ENCODE measurements at regions of chr1 and their contacts with region 1.

Region 1: GRCh38 chr1:101288491-101288944 is 51.7 kb downstream of the S1PR1 start:
- DNase-seq: peak; percentile 79
- ATAC-seq: peak; percentile 58
- H3K4me3 Mint-ChIP-seq: no peak overlapping the region
- H3K27ac Mint-ChIP-seq: no peak overlapping the region
- H3K4me1 Mint-ChIP-seq: peaks cover 76% of the 10 kb centered on the region
- H3K27me3 Mint-ChIP-seq: no peaks in the 10 kb centered on the region

Region 2: GRCh38 chr1:100905181-100905580 is 383.3 kb before region 1 on chr1:
- CTCF ChIA-PET with region 1: interaction called, 21 read pairs
- POLR2A ChIA-PET with region 1: interaction called, 4 read pairs
- DNase-seq: no peak
- ATAC-seq: no peak
- H3K4me3 Mint-ChIP-seq: no peak overlapping the region
- H3K27ac Mint-ChIP-seq: no peak overlapping the region
- H3K4me1 Mint-ChIP-seq: peaks cover 21% of the 10 kb centered on the region
- H3K27me3 Mint-ChIP-seq: no peaks in the 10 kb centered on the region

Region 3: DNA sequence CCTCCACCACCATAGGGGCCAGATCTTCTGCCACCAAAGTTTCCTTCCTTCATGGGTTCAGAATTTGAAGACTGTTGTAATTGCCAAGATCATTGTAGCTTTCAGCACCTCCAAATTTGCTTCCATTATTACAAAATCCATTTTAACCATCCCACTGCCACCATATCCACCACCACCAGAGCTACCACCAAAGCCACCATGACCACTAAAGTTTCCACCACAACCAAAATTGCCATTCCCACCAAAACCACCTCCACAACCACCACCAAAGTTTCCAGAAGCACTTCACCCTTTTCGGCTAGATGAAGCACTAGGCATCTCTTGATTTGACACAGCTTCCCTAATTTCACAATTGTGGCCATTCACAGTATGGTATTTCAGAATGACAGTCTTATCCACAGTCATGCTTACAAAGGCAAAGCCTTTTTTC is 347.4 kb before region 1 on chr1:
- CTCF ChIA-PET with region 1: interaction called, 12 read pairs
- POLR2A ChIA-PET with region 1: no interaction called
- DNase-seq: no peak
- ATAC-seq: peak; percentile 44
- H3K4me3 Mint-ChIP-seq: peak overlapping the region; percentile 64
- H3K27ac Mint-ChIP-seq: peak overlapping the region; percentile 80
- H3K4me1 Mint-ChIP-seq: peaks cover 35% of the 10 kb centered on the region
- H3K27me3 Mint-ChIP-seq: no peaks in the 10 kb centered on the region

Region 4: DNA sequence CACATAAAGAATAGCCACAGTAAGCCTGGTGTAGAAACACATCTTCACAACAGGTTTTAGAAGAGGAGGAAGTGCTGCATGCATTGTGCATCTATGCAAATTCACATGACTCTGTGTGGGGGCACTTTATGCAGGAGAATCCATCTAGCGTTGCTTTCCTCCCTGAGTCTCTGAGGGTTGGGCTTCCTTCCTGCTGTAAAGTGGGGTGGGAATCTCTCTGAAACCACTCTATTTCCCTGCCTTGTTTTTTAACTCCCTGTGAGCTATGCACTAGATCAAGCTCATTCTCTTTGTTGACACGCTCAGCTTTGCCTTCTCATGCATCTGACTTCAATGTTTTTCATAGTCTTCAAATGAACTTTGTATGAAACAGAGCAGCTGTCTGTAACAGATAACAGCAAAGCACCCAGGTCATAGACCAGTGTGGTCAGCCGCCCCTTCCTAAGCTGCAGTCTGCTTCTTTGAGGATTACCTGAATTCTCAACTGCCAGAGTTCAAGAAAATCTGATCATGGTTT is 160.2 kb before region 1 on chr1:
- CTCF ChIA-PET with region 1: interaction called, 39 read pairs
- POLR2A ChIA-PET with region 1: interaction called, 4 read pairs
- DNase-seq: peak; percentile 47
- ATAC-seq: peak; percentile 74
- H3K4me3 Mint-ChIP-seq: peak overlapping the region; percentile 58
- H3K27ac Mint-ChIP-seq: peak overlapping the region; percentile 81
- H3K4me1 Mint-ChIP-seq: peaks cover 78% of the 10 kb centered on the region
- H3K27me3 Mint-ChIP-seq: no peaks in the 10 kb centered on the region

Region 5: DNA sequence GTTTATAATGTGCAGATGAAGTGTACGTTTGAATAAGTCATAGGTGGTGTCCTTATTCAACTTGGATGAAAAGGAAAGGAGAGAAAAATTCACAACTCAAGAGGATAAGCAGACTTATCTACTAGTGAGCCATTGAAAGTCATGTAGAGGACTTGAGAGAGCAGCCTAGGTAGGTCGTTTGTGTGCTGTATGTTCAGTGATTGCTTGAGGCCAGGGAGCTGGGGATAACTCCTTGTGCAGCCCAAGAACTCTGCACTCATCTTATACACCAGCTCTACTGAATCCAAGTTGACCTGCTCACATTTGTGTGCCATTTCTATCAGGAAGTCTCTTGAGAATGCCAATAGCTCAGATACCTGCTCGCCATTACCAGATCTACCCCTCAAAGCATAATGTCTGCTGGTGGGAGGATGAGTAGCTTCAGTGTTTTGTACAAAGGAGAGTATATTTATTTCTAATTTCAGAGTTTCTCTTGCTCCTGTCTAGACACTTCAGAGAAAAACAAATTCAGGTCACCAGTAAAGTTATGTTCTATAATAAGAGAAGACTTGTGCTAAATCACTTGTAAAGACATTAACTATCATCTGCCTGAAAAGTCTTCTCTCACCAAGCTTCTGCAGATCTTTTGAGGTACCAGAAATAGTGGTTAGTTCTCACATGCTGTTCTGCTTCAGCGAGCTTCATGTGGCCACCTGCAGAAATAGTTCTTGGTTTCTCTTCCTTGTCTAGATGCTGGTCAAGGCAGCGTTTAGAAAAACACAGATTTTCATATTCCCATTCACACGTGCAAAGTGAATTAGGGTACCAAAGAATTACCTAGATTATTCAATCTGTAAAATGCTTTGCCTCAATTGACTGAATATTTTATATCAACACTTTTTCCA is 40.9 kb before region 1 on chr1:
- CTCF ChIA-PET with region 1: interaction called, 43 read pairs
- POLR2A ChIA-PET with region 1: interaction called, 6 read pairs
- DNase-seq: peak; percentile 11
- ATAC-seq: no peak
- H3K4me3 Mint-ChIP-seq: no peak overlapping the region
- H3K27ac Mint-ChIP-seq: no peak overlapping the region
- H3K4me1 Mint-ChIP-seq: peaks cover 22% of the 10 kb centered on the region
- H3K27me3 Mint-ChIP-seq: no peaks in the 10 kb centered on the region

Region 6: GRCh38 chr1:101298663-101299062 is 10.1 kb after region 1 on chr1:
- CTCF ChIA-PET with region 1: interaction called, 12 read pairs
- POLR2A ChIA-PET with region 1: no interaction called
- DNase-seq: no peak
- ATAC-seq: no peak
- H3K4me3 Mint-ChIP-seq: no peak overlapping the region
- H3K27ac Mint-ChIP-seq: no peak overlapping the region
- H3K4me1 Mint-ChIP-seq: peaks cover 14% of the 10 kb centered on the region
- H3K27me3 Mint-ChIP-seq: peaks cover 29% of the 10 kb centered on the region

Region 7: DNA sequence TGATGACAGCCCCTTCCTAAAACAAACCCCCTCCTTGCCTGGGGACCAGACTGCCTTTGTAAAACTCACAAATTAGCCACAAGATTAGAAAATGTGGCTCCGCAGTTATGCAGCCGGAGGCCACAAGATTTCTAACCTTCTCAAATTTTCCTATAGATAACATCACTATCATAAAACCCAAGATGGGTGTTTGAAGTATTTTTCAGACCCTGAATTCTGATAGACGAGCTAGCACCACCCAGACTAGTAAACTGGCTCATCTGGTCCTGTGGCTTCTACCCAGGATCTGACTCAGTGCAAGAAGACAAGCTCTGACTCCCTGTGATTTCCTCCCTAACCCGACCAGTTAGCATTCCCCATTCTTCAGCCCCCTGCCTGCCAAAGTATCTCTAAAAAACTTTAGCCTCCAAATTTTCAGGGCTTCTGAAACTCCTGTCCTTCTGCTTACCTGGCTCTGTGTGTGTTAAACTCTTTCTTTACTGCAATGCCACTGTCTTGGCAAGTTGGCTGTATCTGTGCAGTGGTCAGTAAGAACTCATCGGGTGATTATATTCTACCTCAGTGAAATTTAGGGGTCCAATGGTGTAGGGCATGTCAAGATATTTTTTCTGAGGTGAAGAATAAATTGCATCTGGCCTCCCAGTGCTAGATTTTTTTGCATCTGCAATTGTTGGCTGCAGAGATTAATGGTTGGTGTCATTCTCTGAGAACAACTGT is 50.4 kb after region 1 on chr1:
- CTCF ChIA-PET with region 1: no interaction called
- POLR2A ChIA-PET with region 1: no interaction called
- DNase-seq: no peak
- ATAC-seq: peak; percentile 64
- H3K4me3 Mint-ChIP-seq: no peak overlapping the region
- H3K27ac Mint-ChIP-seq: no peak overlapping the region
- H3K4me1 Mint-ChIP-seq: peaks cover 7% of the 10 kb centered on the region
- H3K27me3 Mint-ChIP-seq: no peaks in the 10 kb centered on the region

Measured in activated CD8-positive, alpha-beta T cell treated with anti-CD3 and anti-CD28 coated beads, Interleukin-2, amount 10 ng/mL, durations not matched to agents 7 days and 5 days (primary cell).